Cardiac septum (tissue), 1 donor: ENCODE measurements at regions of chr1 and their contacts with region 1.

Region 1: DNA sequence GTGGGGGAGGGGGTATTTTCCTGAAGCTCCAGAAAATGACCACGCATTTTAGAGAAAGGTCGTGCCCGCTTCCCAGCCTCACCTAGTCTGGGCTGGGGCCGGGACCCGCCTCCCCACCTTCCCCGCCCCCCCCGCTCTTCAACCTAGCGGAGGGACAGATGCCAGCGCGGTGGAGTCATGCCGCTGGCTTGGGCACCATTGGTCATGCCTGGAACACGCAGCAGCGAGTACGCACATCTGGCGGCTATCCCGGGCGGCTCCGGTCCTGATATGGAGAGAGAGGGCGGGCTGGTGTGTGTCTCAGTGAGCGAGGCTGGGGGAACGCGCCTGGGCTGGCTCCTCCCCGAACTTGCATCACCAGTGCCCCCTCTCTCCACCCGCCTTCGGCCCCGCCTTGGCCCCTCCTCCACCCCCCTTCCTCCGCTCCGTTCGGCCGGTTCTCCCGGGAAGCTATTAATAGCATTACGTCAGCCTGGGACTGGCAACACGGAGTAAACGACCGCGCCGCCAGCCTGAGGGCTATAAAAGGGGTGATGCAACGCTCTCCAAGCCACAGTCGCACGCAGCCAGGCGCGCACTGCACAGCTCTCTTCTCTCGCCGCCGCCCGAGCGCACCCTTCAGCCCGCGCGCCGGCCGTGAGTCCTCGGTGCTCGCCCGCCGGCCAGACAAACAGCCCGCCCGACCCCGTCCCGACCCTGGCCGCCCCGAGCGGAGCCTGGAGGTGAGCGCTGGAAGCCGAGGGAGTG is at the start of gene ATF3:
- DNase-seq: peak; percentile 99
- total RNA-seq, gene ATF3: 16.2 TPM

Region 2: DNA sequence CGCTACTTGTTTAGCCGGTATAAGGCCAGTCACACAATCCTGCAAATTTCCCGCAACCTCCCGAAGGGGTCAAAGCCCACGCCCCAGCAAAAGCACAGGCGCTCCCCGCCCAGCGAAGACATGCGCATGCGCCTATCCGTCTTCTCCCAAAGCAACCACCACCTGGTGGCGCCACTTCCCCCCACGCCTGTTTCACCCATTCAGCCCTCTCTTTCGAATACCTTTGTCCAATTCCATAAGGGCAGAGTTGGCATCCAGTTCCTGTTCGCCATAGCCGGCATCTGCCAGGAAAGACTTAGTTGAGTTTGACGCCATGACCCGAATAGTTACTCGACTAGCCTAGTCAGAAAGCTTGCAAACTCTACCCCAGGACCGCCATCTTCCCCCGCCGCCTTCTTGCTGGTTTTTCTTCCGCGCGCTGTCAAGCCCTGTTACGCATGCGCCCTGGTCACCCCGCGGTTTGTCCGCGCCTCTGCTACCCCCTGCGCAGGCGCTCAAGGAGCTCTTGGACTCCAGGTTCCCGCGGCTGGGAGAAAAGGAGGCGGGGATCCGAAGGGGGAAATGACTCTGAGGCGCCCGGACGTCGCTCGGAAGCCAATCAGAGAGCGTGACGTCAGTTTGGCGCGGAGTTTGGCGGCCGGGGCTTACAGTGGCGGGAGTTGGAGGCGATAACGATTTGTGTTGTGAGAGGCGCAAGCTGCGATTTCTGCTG is 573.1 kb before region 1 on chr1 and contains the starts of genes DTL and INTS7:
- intact Hi-C with region 1: loop called (anchors 10 kb)
- DNase-seq: peak; percentile 99
- total RNA-seq, gene DTL: 0.48 TPM
- total RNA-seq, gene INTS7: 8.4 TPM

Region 3: DNA sequence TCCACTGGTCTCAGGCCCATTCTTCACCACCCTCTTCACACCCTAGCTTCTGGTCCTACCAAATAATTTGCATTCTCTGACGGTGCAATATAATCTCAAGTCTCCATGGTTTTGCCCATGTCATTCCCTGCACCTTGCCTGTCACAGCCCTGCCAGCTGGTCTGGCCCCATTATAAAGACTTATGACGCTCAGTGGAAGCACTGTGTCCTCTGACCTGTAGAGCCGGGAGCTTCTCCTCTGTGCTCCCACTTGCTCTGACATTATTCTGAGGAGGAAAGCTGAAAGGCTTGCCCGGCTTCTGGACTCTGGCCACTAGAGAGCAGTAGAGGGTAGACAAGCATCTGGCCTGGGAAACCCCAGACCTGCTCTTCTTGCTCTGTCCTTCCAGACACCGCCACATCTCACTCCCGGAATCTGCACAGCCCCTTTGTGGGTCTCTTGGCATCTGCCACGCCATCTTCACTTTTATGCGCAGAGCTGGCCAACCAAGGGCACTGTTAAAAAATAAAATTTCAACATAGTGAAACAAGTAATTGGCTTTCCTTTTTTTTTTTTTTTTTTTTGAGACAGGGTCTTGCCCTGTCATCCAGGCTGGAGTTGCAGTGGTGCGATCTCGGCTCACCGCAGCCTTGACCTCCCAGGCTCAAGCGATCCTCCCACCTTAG is 131.2 kb before region 1 on chr1:
- intact Hi-C with region 1: loop called (anchors 2 kb)
- DNase-seq: peak; percentile 84

Region 4: DNA sequence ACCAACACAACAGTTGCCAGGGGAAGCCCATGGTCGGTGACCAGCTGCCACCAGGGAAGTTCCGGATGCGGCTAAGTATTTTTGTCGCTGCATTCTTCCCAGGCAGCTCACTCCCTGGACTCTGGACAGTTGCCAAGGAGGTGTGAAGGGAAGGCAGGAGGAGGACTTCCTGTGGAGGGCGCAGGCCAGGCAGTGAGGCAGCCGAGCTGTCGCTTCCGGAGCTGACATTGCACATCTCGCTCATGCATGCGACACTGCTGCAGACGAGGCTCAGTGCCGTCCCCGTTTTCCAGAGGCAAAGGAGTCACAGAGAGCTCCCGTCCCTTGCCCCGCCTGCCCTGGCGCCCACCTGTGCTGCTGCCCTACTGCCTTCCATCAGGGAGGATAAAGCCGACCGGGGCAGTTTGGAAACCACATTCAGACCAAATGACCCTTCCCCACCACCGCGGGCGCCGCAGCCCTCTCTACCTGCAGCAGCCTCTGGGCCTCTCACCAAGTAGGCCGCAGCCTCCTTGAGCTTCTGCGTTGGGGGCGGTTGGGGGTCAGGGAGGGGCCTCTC is 94.2 kb before region 1 on chr1:
- intact Hi-C with region 1: loop called (anchors 1 kb)
- DNase-seq: peak; percentile 78

Region 5: DNA sequence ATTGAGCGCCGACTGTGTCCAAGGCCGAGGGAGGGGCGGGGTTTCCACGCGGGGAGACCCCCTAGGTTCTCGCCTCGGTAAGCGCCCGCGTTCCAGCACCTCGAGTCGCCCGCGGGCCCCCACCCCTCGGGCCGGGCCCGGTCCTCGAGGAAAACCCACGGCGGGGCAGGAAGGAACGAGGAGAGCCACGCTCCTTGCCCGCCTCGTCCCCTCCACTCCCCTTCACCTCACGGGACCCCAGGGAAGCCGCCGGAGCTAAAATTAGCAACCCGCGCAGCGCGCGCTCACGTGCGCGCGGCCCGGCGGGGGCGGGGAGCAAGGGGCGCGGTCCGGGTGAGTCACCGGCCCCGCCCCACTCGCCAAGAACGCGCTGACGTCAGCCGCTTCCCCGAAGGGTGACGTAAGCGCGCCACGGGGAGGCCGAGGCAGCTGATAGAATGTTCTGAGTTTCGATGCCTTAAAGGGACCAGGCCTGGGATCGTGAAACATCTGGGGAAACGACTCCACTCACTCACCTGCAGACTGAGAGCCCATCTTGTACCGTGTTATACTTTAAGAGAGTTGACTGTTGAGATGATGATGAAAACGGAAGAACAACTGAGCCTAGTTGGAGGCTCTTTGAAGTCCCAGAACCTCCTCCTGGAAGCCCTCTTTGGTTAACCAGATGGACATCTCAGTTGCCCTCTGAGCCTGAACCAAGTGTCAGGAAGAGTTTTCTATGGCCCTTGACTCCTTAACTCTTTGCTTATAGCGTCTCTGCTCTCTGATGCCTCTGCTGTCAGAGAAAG is 49.5 kb before region 1 on chr1:
- intact Hi-C with region 1: loop called (anchors 1 kb)
- DNase-seq: peak; percentile 96

Region 6: DNA sequence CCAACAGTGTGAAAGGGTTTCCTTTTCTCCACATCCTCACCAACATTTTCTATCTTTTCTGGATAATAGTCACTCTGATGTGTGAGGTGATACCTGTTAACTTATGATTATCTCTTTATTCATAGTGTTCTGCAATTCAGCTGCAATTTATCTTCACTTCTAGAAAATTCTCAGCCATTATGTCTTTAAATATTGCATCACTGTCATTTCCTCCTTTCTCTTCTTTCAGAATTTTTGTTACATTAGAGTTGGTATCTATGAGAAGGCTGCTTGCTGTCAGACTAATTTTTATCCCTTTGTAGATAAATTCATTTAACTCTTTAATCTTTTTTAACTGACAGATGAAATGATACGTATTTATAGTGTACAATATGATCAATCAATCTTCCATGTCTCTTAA is 30.3 kb before region 1 on chr1:
- intact Hi-C with region 1: no loop called
- DNase-seq: no peak

Region 7: GRCh38 chr1:212665241-212666115 is 57.1 kb after region 1 on chr1:
- intact Hi-C with region 1: loop called (anchors 2 kb)
- DNase-seq: peak; percentile 94

Region 8: DNA sequence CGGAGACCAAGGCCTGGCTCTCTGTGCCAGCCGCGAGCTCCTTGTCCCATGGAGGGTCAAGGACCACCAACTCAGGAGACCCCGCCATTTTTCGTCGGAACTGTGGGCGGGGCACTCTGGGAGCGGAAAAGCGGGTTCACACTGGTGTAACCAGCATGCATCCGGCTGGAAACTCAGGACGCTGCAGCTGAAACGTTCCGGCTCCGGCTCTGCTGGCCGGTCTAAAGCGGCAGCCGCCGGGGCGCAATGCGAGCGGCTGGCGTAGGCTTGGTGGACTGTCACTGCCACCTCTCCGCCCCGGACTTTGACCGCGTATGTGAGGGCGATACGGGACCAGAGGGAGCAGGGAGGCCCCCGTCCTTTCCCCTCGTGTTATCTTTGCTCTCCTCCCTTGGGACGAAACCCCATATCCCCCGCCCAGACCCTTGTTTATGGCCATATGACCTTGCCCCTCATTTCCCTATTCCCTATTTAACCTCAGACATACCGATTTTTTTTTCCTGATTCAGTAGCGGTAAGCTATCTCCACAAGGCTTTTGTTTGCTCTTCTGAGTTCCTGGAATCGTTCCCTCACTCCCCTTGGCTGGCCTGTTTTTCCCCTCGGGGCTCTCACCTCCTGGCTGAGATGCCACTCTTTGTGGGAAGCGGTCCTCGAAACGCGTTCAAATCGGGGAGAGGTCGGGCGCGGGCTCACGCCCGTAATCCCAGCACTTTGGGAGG is 183.5 kb after region 1 on chr1 and contains the starts of genes NSL1 and TATDN3:
- intact Hi-C with region 1: loop called (anchors 5 kb)
- DNase-seq: peak; percentile 96
- total RNA-seq, gene NSL1: 27.0 TPM
- total RNA-seq, gene TATDN3: 22.4 TPM